Left colon (tissue), 2 donors: ENCODE measurements at regions of chr13 and their contacts with region 1.

Region 1: DNA sequence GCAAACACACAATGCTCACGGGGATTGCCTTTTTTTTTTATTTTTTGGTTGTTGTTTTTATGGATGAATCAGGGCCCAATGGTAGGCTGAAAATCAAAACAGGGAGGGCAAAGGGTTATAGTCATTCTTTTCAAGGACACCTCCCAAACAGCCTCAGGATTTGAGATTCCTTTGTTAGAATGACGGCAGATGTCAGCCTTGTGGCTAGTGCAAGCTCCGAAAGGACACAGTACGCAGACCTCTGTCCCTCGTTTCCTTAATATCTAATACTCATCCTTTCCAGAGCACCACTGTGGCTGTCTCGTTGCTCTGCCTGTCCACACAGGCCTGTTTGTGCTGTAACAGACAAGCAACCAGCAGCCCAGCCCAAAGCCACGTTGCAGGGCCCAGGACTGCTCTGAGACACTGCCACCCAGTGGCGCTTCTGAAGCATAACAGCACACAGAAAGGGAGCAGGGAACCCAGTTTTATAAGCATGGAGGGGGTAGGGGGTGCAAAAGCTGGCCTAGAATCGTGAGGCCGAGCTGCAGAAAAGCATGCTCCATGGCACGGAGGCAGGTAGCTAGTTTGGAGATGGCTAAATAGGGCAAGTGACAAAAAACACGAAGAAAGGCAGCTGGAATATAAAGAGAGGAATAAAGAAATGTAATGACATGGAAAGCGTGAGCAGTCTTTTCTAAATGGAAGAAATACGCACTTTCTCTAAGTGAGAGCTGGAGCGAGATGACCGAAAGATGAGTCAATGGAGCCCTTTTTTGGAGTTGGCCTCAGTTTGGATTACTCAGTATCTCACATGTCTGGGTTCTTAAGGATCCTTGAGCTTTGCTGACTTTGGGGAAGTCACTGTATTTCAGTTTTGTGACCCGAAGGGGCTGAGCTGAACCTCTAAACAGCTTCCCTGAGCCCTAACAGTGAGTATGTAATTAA is 40.7 kb upstream of the MEDAG start:
- DNase-seq: peak; percentile 78
- ATAC-seq: peak; percentile 97

Region 2: DNA sequence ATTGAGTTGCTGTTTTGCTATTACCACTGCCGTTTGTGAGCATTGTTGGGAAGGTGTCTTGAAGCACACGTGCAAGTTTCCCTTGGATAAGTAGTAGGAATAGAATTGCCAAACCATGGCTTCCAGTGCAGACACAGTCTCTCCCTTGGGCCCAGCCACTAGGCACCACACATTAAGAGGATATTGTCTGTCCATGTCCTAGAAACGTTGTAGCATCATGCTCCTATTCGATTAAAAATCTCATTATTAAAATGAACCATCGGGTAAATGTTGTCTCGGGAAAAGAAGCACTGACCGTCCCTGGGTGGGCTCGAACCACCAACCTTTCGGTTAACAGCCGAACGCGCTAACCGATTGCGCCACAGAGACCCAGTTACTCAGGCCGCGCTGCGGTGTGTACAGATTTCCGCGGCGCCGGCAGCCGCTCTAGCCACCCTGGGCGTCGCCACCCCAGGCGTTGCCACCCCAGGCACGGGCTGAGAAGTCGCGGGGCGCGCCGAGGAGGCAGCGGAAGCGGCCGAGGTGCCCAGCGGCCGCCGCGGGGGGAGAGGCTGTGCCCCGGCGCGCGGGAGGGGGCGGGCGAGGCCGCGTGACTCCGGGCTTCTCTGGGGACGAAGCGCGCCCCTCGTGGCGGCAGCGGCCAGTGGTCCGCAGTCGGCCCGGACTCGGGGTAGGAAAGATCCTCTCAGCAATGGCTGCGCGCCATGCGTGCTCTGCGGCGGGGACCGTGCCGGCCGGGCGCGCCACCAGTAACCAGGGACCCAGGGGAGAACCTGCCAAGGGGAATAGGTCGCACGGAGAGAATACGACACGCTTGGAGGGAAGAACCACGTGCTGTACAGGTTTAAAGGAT is 191.5 kb before region 1 on chr13:
- intact Hi-C with region 1: loop called in 1 of 2 experiments (anchors 10 kb)
- DNase-seq: peak; percentile 90 to 92
- ATAC-seq: peak; percentile 97